IMR-90 (cell line): ENCODE measurements at regions of chr1 and their contacts with region 1.

Region 1: DNA sequence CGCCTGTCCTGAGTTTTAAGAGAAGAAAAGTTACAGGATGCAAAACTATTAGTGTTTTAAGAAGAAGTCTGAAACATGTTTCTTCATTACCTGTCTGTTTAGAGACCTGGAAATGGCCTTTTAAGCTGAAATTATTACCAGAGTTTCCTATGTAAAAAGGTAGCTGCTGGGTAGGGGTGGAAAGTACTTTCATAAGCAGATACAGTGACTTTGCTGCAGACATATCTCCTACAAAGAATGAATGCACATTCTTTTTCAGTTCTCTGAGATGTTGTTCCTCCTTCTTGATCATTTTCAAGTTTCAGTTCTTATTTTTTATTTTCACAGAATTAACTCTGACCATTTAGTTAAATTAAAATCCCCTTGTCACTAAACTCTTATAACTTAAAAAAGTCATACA is 1329.6 kb downstream of the KCNT2 start:
- DNase-seq: no peak
- ATAC-seq: no peak
- H3K4me3 ChIP-seq: no peak overlapping the region
- H3K27ac ChIP-seq: no peak overlapping the region
- H3K4me1 ChIP-seq: no peaks in the 10 kb centered on the region
- H3K27me3 ChIP-seq: no peaks in the 10 kb centered on the region
- CTCF ChIP-seq: no peak
- POLR2A ChIP-seq: no peak
- RAD21 ChIP-seq: no peak

Region 2: DNA sequence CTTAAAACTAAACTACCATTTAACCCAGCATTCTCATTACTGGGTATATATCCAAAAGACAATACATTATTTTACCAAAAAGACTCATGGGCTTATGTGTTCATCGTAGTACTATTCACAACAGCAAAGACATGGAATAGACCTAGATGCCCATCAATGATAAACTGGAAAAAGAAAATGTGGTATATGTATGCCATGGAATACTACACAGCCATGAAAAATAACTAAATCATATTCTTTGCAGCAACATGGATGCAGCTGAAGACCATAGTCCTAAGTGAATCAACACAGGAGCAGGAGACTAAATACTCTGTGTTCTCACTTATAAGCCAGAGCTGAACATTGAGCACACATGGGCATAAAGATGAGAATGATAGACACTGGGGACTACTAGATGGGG is 1447.2 kb before region 1 on chr1:
- CTCF ChIA-PET with region 1: no interaction called
- POLR2A ChIA-PET with region 1: no interaction called
- dilution Hi-C with region 1: no loop called
- in situ Hi-C with region 1: no loop called
- intact Hi-C with region 1: loop called (anchors 5 kb)
- DNase-seq: no peak
- ATAC-seq: no peak
- H3K4me3 ChIP-seq: no peak overlapping the region
- H3K27ac ChIP-seq: no peak overlapping the region
- H3K4me1 ChIP-seq: no peaks in the 10 kb centered on the region
- H3K27me3 ChIP-seq: no peaks in the 10 kb centered on the region
- CTCF ChIP-seq: no peak
- POLR2A ChIP-seq: no peak
- RAD21 ChIP-seq: no peak

Region 3: GRCh38 chr1:195876792-195877191 is 598.1 kb after region 1 on chr1:
- CTCF ChIA-PET with region 1: no interaction called
- POLR2A ChIA-PET with region 1: interaction called, 13 read pairs
- dilution Hi-C with region 1: no loop called
- in situ Hi-C with region 1: no loop called
- intact Hi-C with region 1: no loop called
- DNase-seq: no peak
- ATAC-seq: no peak
- H3K4me3 ChIP-seq: no peak overlapping the region
- H3K27ac ChIP-seq: no peak overlapping the region
- H3K4me1 ChIP-seq: no peaks in the 10 kb centered on the region
- H3K27me3 ChIP-seq: no peaks in the 10 kb centered on the region
- CTCF ChIP-seq: no peak
- POLR2A ChIP-seq: no peak
- RAD21 ChIP-seq: no peak